ENCODE measurements at regions of chr1 and their contacts with region 1.

Region 1: DNA sequence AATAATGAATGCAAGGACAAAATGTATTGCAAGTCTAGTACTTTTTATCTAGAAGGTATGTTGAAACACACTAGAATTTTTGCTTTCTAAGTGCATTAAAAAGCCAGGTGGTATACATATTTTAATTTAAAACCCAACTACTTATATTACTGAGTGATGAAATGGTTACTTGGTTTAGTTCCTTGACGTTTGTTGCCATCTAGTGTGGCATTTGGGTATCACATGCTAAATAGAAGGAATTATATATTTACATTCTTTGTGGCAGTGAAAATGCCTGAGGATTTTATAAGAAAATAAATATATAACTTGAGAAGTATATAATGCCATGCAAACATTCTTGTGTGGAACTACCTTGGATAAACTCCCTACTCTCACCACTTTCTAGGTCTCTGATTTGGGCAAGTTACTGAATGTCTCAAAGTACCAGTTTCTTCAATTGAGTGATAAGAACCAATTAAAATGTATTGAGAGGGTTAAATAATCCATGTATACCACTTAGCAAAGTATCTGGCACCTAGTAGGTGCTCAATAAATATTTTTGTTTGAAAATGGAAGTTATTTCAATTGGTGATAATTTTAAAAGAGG is 69.6 kb downstream of the SDCCAG8 start:
- DNase-seq: peak in 5 of 42 donors; percentile 27 to 69 (median 36)

Region 2: GRCh38 chr1:242467556-242468145 is 857.7 kb before region 1 on chr1:
- intact Hi-C with region 1: loop called (anchors 10 kb)
- DNase-seq: peak; percentile 19 to 90 (median 72)

Region 3: GRCh38 chr1:242530761-242531160 is 794.6 kb before region 1 on chr1:
- intact Hi-C with region 1: no loop called
- DNase-seq: no peak

Region 4: GRCh38 chr1:242828199-242828598 is 497.2 kb before region 1 on chr1:
- intact Hi-C with region 1: loop called (anchors 5 kb)
- DNase-seq: peak in 41 of 42 donors; percentile 6 to 84 (median 60)

Region 5: GRCh38 chr1:243216741-243217140 is 108.7 kb before region 1 on chr1:
- intact Hi-C with region 1: no loop called
- DNase-seq: no peak